Mammary epithelial cell (primary cell): ENCODE measurements at regions of chr18 and their contacts with region 1.

Region 1: GRCh38 chr18:3869848-3870247 is 419.9 kb downstream of the TGIF1 start:
- DNase-seq: peak; percentile 37
- H3K4me3 ChIP-seq: no peak overlapping the region
- H3K27ac ChIP-seq: no peak overlapping the region
- H3K4me1 ChIP-seq: no peaks in the 10 kb centered on the region
- H3K27me3 ChIP-seq: peaks cover 1% of the 10 kb centered on the region
- CTCF ChIP-seq: peak; percentile 46 to 59

Region 2: GRCh38 chr18:3261371-3262246 is 608.2 kb before region 1 on chr18 and contains the start of gene MYL12B:
- CTCF ChIA-PET with region 1: no interaction called
- dilution Hi-C with region 1: no loop called
- in situ Hi-C with region 1: loop called in 1 of 2 experiments (anchors 25 kb)
- intact Hi-C with region 1: no loop called
- DNase-seq: peak; percentile 82
- H3K4me3 ChIP-seq: peak within 1 kb of the TSS; percentile 77 to 93 (median 85)
- H3K27ac ChIP-seq: peak within 1 kb of the TSS; percentile 97
- H3K4me1 ChIP-seq: peaks cover 27% of the 10 kb centered on the region
- H3K27me3 ChIP-seq: no peaks in the 10 kb centered on the region
- CTCF ChIP-seq: peak in 1 of 2 donors; percentile 8
- total RNA-seq, gene MYL12B: 464 to 468 TPM

Region 3: DNA sequence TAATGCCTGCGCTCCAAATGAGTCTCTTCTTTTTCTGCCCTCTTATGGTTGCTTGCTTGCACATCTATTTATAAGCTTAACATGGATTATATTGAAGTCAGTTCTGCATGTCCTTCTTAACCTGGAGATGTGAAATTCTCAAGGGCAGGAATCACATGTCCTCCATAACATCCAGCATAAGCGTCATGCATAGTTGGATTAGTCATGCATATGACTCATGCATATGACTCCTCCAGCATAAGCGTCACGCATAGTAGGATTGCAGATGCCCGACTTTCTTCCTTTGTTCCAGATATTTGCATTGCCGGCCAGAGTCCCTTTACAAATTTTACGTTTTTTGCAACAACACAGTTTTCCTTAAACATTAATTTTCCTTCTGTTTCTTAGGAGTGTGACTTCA is 111.3 kb before region 1 on chr18:
- CTCF ChIA-PET with region 1: no interaction called
- dilution Hi-C with region 1: no loop called
- in situ Hi-C with region 1: loop called in 1 of 2 experiments (anchors 10 kb)
- intact Hi-C with region 1: no loop called
- DNase-seq: peak; percentile 50
- H3K4me3 ChIP-seq: no peak overlapping the region
- H3K27ac ChIP-seq: no peak overlapping the region
- H3K4me1 ChIP-seq: no peaks in the 10 kb centered on the region
- H3K27me3 ChIP-seq: no peaks in the 10 kb centered on the region
- CTCF ChIP-seq: no peak

Region 4: GRCh38 chr18:3771121-3771971 is 98.5 kb before region 1 on chr18:
- CTCF ChIA-PET with region 1: interaction called, 85 read pairs
- dilution Hi-C with region 1: no loop called
- in situ Hi-C with region 1: loop called in 1 of 2 experiments (anchors 10 kb)
- intact Hi-C with region 1: loop called (anchors 1 kb)
- DNase-seq: peak; percentile 83
- H3K4me3 ChIP-seq: peak overlapping the region in 2 of 3 experiments; percentile 27 to 39
- H3K27ac ChIP-seq: peak overlapping the region; percentile 47
- H3K4me1 ChIP-seq: peaks cover 5% of the 10 kb centered on the region
- H3K27me3 ChIP-seq: no peaks in the 10 kb centered on the region
- CTCF ChIP-seq: peak; percentile 67 to 93

Region 5: DNA sequence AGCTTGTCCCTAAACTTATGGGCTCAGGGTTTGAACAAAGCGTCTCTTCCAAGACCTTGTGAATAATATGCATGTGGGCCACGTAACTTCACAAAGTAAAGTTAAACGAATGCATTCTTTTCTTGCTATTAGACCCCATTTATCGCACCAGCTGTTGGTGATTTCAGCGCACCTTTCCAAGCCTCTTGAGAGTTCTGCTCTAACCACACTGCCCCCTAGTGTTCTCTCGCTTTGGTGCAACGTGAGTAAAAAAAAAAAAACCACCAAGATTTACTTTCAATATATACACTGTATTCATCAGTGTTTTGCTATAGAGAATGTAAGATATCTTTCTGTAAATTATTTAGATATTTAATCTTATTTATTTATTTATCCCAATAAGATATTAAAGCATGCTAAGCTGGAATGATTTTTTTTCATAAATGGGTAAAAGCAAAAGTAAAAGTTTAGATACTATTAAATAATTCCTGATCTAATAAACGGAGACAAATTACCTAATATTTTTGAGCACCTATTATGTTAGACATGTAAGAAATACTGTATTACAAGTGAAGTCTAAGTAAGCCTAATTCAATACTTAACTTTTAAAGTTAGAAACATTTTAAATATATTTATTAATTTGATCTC is 125.7 kb after region 1 on chr18:
- CTCF ChIA-PET with region 1: interaction called, 4 read pairs
- dilution Hi-C with region 1: no loop called
- in situ Hi-C with region 1: no loop called
- intact Hi-C with region 1: loop called (anchors 1 kb)
- DNase-seq: peak; percentile 55
- H3K4me3 ChIP-seq: peak overlapping the region in 2 of 3 experiments; percentile 3 to 22
- H3K27ac ChIP-seq: no peak overlapping the region
- H3K4me1 ChIP-seq: peaks cover 5% of the 10 kb centered on the region
- H3K27me3 ChIP-seq: no peaks in the 10 kb centered on the region
- CTCF ChIP-seq: peak; percentile 87 to 92